Ascending aorta (tissue), 2 donors: ENCODE measurements at regions of chr9 and their contacts with region 1.

Region 1: DNA sequence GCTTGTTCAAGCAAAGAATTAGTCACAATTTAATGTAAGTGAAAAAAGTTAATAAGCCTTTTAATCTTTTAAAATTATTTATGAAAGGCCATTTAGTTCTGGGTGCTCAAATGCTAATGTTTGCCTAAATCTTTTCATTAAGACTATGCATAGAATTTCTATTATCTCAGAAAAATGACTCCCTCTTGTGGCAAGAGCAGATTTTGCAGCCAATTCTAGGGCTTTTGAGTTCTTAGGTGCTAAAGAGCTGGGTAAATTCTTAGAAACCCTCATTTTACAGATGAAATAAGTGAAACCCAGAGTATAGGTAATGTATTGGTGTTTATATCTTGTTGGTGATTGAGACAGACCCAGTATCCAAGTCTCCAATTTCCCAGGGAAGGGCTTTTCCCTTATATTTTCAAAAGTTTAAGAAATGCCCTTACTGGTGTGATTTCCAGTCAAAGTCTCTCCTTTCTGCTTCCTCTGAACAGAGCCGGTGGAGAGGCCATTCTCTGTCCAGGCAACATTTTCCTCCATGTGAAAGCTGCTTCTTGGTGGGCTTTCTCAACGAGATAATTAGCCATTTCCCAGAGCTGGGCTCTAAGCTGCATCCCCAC is 24.1 kb upstream of the PCSK5 start:
- DNase-seq: peak in 1 of 2 donors; percentile 73
- H3K4me3 ChIP-seq: no peak overlapping the region
- H3K27ac ChIP-seq: no peak overlapping the region
- H3K4me1 ChIP-seq: no peaks in the 10 kb centered on the region
- H3K27me3 ChIP-seq: no peaks in the 10 kb centered on the region
- CTCF ChIP-seq: peak; percentile 56 to 82 (median 78)

Region 2: GRCh38 chr9:75010570-75010969 is 855.8 kb before region 1 on chr9:
- intact Hi-C with region 1: no loop called
- DNase-seq: no peak
- H3K4me3 ChIP-seq: no peak overlapping the region
- H3K27ac ChIP-seq: no peak overlapping the region
- H3K4me1 ChIP-seq: no peaks in the 10 kb centered on the region
- H3K27me3 ChIP-seq: no peaks in the 10 kb centered on the region
- CTCF ChIP-seq: no peak

Region 3: DNA sequence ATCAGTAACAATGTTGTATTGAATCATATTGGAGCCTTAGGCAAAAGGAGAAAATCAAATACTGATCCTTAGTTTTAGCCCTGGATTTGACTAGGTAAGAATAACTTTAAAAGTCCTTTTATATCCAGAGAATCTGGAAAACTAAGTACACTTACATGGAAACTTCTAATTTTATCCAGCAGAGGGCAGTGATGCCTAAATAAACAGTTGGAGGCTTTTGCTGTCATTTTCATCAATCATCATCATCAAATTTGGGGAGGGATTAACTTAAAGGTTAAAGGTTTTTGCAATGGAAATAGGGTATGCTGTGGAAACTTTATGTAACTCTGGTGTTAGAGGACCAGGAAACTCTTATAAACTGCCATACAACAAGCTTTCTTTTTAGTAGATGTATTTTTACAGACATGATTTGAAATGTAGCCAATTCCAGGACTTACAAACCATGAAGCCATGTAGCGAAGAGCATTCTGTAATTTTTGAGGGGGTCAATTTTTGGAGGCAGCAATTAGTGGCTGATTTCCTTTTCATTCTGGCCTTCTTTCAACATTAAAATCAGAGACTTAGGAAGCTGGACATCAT is 665.4 kb before region 1 on chr9:
- intact Hi-C with region 1: loop called (anchors 10 kb)
- DNase-seq: no peak
- H3K4me3 ChIP-seq: no peak overlapping the region
- H3K27ac ChIP-seq: no peak overlapping the region
- H3K4me1 ChIP-seq: peaks cover 0 to 3% of the 10 kb centered on the region in 2 donors
- H3K27me3 ChIP-seq: no peaks in the 10 kb centered on the region
- CTCF ChIP-seq: peak; percentile 49 to 75 (median 64)